ENCODE measurements at regions of chr10 and their contacts with region 1.

Region 1: DNA sequence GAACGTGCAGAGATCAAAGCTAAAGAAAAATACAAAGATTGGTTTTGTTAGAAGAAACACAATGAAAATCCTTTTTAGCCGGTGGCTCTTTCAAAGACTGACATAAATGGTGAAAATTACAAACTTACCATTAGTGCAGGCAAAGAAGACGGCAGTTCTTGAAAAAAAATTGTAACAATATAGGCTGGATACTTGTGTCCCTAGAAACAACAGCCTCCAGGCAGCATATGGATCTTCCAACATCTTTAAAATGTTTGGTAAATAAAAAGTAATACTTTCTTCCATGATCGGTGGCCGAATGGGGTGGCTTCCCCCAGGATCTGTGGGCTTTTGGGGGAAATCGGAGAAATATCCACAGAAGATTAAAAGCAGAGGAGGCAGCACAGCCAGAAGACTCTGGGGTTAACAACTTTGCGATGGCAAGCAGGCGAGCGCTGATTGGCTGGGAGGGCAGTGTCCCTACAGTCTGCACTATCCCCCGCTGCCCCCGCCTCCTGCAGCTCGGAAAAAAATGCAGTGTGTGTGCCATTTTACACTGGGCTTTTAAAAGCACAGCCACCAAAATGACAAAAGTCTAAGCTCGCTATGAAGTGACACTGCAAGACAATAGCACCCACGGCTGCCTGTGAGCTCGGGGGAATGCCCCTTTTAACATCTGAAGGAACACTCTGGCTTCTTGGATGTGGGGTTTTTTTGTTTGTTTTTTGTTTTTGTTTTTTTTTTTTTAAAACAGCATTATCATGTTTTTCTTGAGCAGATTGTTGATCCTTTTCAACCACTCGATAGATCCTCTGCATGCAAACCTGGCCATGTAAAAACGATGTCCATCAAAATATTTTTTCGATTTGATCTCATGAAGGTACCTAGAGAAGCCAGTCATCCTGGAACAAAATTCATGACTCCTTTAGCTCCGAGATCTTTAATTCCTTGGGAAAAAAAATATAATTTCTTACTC is 31.7 kb upstream of the EPC1 start:
- DNase-seq: peak in 1 of 2 donors; percentile 95
- H3K4me3 ChIP-seq: peak overlapping the region; percentile 60 to 72
- H3K27ac ChIP-seq: peak overlapping the region; percentile 84
- H3K4me1 ChIP-seq: peaks cover 16% of the 10 kb centered on the region
- H3K27me3 ChIP-seq: no peaks in the 10 kb centered on the region
- CTCF ChIP-seq: no peak
- POLR2A ChIP-seq: no peak

Region 2: GRCh38 chr10:32055813-32056600 is 322.6 kb before region 1 on chr10 and contains the start of gene KIF5B:
- intact Hi-C with region 1: loop called (anchors 10 kb)
- DNase-seq: no peak
- H3K4me3 ChIP-seq: peak within 1 kb of the TSS; percentile 94 to 95
- H3K27ac ChIP-seq: peak within 1 kb of the TSS; percentile 99
- H3K4me1 ChIP-seq: peaks cover 52% of the 10 kb centered on the region
- H3K27me3 ChIP-seq: no peaks in the 10 kb centered on the region
- CTCF ChIP-seq: no peak
- POLR2A ChIP-seq: peak in 1 of 2 donors; percentile 99
- total RNA-seq, gene KIF5B: 74.2 TPM

Region 3: GRCh38 chr10:32210306-32211045 is 168.2 kb before region 1 on chr10:
- intact Hi-C with region 1: no loop called
- DNase-seq: no peak
- H3K4me3 ChIP-seq: no peak overlapping the region
- H3K27ac ChIP-seq: no peak overlapping the region
- H3K4me1 ChIP-seq: no peaks in the 10 kb centered on the region
- H3K27me3 ChIP-seq: no peaks in the 10 kb centered on the region
- CTCF ChIP-seq: peak in 1 of 3 experiments; percentile 29
- POLR2A ChIP-seq: no peak

Region 4: GRCh38 chr10:32256613-32257437 is 121.8 kb before region 1 on chr10:
- intact Hi-C with region 1: no loop called
- DNase-seq: no peak
- H3K4me3 ChIP-seq: no peak overlapping the region
- H3K27ac ChIP-seq: no peak overlapping the region
- H3K4me1 ChIP-seq: no peaks in the 10 kb centered on the region
- H3K27me3 ChIP-seq: no peaks in the 10 kb centered on the region
- CTCF ChIP-seq: peak; percentile 44 to 83 (median 66)
- POLR2A ChIP-seq: no peak

Measured in vagina (tissue), 2 donors.